ENCODE measurements at regions of chr7 and their contacts with region 1.

Region 1: DNA sequence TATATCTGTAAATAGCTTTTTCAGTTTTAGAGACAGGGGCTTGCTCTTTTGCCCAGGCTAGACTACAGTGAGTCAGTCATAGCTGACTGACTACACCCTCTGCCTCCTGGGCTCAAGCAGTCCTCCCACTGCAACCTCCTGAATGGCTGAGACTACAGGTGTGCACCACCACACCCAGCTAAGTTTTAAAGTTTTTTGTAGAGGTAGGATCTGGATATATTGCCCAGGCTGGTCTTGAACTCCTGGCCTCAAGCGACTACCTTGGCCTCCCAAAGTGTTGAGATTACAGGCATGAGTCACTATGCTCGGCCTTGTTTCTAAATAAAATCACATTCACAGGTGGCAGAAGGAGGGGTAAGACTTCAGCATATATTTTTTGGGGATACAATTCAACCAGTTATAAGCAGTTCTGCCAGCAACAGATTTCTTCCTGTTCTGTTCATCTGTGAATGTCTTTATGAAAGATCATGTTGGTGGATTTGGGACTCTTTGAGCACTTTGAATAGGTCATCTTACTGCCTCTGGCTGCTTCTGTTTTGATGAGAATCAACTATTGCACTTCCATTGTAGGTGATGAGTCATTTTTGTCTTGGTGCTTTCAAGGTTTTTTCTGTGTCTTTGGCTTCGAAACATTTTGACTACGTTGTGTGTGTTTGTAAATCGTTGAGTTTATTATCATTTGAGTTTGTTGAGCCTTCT is 15.7 kb downstream of the RBM33 start:
- DNase-seq: peak; percentile 48
- H3K4me3 Mint-ChIP-seq: peak overlapping the region; percentile 4
- H3K27ac Mint-ChIP-seq: peak overlapping the region; percentile 69
- H3K4me1 Mint-ChIP-seq: peaks cover 40% of the 10 kb centered on the region
- H3K27me3 Mint-ChIP-seq: no peaks in the 10 kb centered on the region

Region 2: DNA sequence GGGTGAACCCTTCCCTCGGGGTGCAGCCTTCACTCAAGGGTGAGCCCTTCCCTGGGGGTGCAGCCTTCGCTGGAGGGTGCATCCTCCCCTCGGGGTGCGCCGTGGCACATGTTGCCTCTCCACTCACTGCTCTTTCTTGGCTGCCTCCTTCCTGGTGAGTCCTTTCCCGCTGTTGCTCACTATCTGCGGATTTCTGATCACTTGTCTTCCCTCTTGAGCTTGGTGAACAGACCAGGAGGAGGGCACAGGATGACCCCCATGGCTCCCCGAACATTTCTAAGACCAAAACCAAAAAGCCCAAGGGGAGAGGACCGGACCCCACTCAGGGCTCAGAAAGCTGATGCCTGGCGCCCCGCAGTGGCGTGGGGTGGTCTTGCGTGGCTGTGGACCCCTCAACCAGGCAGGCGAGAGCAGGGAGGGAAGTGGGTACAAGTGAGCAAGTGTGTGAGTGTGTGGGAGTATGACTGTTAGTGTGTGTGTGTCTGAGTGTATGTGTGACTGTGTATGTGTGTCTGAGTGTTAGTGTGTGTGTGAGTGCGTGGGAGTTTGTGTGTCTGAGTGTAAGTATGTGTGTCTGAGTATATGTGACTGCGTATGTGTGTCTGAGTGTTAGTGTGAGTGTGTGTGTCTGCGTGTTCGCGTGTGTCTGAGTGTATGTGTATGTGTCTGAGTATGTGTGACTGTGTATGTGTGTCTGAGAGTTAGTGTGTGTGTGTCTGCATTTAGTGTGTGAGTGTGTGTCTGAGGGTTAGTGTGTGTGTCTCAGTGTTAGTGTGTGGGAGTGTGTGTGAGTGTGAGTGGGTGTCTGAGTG is 396.7 kb before region 1 on chr7:
- intact Hi-C with region 1: no loop called
- DNase-seq: no peak
- H3K4me3 Mint-ChIP-seq: no peak overlapping the region
- H3K27ac Mint-ChIP-seq: no peak overlapping the region
- H3K4me1 Mint-ChIP-seq: no peaks in the 10 kb centered on the region
- H3K27me3 Mint-ChIP-seq: peaks cover 2% of the 10 kb centered on the region

Region 3: DNA sequence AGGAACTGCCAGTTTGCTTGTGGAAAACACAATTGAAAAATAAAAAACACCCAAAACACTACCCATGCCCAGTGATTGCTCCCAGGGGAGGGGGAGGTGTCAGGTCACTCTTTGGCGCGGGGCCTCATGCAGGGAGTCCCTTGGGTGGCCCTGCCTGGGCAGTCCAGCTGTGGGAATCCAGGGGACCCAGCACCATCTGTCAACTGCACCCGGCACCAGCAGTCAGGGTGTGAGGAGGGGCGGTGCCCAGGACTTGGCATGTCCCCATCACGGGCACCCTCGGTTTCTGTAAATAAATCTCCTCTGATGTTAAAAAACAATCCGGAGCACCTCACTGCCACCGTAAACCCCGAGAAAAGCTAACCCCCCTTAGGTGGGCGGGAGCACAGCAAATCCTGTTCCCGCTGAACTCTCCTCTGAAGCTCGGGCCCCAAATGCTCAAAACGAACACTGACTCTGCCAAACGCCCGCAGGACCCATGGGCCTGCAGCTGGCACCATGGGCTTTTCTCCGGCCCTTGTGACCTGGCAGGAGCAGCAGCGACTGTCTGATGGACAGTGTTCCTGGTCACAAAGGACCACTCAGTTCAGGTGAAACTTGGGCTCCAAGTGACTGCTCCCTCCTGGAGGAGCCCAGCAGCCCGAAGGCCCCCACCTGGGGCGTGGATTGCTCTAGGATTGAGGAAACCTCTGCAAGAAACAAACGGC is 220.7 kb before region 1 on chr7:
- intact Hi-C with region 1: no loop called
- DNase-seq: no peak
- H3K4me3 Mint-ChIP-seq: no peak overlapping the region
- H3K27ac Mint-ChIP-seq: no peak overlapping the region
- H3K4me1 Mint-ChIP-seq: no peaks in the 10 kb centered on the region
- H3K27me3 Mint-ChIP-seq: peaks cover 11% of the 10 kb centered on the region

Region 4: GRCh38 chr7:155702616-155703015 is 42.4 kb after region 1 on chr7:
- intact Hi-C with region 1: loop called (anchors 5 kb)
- DNase-seq: no peak
- H3K4me3 Mint-ChIP-seq: no peak overlapping the region
- H3K27ac Mint-ChIP-seq: peak overlapping the region; percentile 56
- H3K4me1 Mint-ChIP-seq: peaks cover 22% of the 10 kb centered on the region
- H3K27me3 Mint-ChIP-seq: no peaks in the 10 kb centered on the region

Region 5: DNA sequence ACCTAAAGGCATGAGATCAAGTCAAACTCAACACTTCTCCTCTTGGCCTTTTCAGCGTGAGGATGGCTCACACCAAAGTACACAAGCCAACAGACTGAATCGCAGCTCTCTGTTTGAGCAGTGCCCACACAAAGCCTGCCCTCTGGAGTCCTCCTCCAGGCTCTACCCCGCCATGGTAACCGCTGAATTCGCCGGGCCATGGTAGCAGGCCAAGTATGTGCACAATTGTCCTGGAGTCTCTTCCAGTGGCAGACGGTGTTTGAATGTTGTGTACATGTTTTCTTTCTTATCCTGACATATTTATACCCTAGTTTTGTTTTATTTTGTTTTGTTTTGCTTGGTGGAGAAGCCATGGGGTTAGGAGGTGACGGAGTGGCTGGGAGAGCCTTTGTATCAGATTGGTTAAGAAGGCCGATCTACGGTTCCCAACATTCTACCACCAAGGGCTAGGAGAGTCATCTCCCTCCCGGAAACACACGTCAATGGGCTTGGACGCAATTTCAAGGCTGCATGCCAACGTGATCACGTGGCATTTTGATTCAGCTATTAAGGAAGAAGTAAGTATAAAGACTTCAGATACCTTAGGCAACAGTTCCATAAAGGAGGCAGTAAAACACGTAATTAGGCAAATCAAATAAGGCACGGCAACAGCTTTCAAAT is 164.1 kb after region 1 on chr7:
- intact Hi-C with region 1: no loop called
- DNase-seq: no peak
- H3K4me3 Mint-ChIP-seq: no peak overlapping the region
- H3K27ac Mint-ChIP-seq: no peak overlapping the region
- H3K4me1 Mint-ChIP-seq: no peaks in the 10 kb centered on the region
- H3K27me3 Mint-ChIP-seq: peaks cover 8% of the 10 kb centered on the region